Right ventricle myocardium inferior (tissue), 1 donor: ENCODE measurements at regions of chr13 and their contacts with region 1.

Region 1: DNA sequence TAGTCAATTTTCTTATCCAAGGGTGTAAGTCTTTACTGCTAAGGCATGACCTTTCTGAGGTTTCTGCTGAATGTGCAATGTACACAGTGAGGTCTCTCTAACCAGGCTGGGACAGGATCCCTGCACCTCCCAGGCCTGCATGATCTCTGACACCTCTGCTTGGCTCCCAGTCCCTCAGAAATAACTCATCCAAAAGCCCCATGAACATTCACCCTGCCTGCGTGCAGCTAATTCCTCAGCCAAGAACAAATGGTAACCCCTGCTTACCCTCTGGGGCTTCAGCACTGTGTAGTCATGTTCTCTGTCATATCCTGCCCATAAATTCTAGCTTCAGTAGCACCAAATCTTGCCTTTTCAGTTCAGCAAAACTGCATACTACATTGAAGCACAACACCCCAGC is 1146.3 kb upstream of the MIR17HG start:
- DNase-seq: no peak
- ATAC-seq: peak; percentile 91

Region 2: DNA sequence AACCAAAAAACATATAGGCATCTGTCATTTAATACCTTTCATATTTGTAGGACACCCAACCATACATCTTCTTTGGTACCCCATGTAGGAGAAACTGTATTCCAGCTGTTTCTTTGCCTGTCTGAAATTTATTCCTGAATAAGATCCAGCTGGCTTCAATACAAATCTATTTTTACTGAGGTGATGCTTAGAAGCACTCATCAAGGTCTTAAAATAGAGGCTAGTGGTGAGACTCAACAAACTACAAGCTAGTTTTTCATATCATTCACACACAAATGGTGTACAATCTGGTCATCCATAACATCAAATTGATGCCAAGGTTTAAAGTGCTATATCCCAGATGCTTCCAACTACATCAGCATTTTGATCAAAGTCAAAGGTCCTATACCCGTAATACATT is 75.0 kb after region 1 on chr13:
- intact Hi-C with region 1: loop called (anchors 2 kb)
- DNase-seq: no peak
- ATAC-seq: peak; percentile 69